ENCODE measurements at regions of chr3 and their contacts with region 1.

Region 1: GRCh38 chr3:179872842-179873241 is 163.9 kb downstream of the PEX5L start:
- DNase-seq: no peak
- H3K4me3 ChIP-seq: no peak overlapping the region
- H3K27ac ChIP-seq: no peak overlapping the region
- H3K4me1 ChIP-seq: peaks cover 0 to 3% (median 0%) of the 10 kb centered on the region in 4 experiments; a peak in 2 of 7 replicates
- H3K27me3 ChIP-seq: no peaks in the 10 kb centered on the region
- CTCF ChIP-seq: peak; percentile 31 to 56 (median 49)
- EP300 ChIP-seq: no peak
- POLR2A ChIP-seq: no peak
- RAD21 ChIP-seq: peak; percentile 51 to 57

Region 2: GRCh38 chr3:179887295-179887943 is 14.6 kb after region 1 on chr3:
- CTCF ChIA-PET with region 1: interaction called, 25 read pairs
- POLR2A ChIA-PET with region 1: no interaction called
- DNase-seq: no peak
- H3K4me3 ChIP-seq: no peak overlapping the region; a peak in 1 of 8 replicates
- H3K27ac ChIP-seq: no peak overlapping the region
- H3K4me1 ChIP-seq: peaks cover 0 to 16% (median 12%) of the 10 kb centered on the region in 4 experiments; a peak in 3 of 7 replicates
- H3K27me3 ChIP-seq: no peaks in the 10 kb centered on the region
- CTCF ChIP-seq: no peak
- EP300 ChIP-seq: no peak
- POLR2A ChIP-seq: no peak
- RAD21 ChIP-seq: no peak

Region 3: DNA sequence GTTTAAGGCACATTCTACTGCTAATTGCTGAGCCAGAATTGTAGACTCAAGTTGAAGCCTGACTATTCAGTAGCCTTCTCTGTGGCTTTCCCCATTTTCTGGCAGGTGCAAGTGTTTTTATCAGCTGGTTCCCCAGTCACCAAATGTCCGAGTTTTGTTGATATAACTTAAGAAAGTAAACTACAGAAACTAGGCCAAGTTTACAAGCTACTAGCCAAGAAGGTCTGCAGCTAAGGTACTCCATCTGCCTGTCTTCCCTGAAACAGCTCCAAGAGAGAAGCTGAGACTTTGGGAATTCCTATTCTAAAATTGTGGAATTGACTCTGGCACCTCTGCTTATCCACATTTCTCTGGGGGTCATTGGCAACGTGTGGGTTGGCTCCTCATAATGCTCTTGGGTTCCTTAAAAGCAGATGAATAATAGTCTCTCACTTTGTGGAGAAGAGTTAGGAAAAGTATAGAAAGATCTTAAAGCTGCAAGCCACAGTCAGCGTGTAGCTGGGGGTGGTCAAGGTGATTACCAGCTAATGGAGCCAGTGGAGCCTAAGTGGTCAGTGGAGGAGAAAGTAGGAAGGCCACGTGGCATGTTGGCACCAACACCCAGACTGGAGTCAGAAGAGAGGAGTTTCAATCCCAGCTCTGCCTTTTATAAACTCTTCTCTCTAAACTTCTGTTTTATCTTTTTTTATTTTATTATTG is 35.1 kb after region 1 on chr3:
- CTCF ChIA-PET with region 1: no interaction called
- POLR2A ChIA-PET with region 1: no interaction called
- DNase-seq: no peak
- H3K4me3 ChIP-seq: no peak overlapping the region
- H3K27ac ChIP-seq: no peak overlapping the region
- H3K4me1 ChIP-seq: no peaks in the 10 kb centered on the region
- H3K27me3 ChIP-seq: no peaks in the 10 kb centered on the region
- CTCF ChIP-seq: no peak
- EP300 ChIP-seq: no peak
- POLR2A ChIP-seq: no peak
- RAD21 ChIP-seq: no peak

Region 4: GRCh38 chr3:180004542-180004941 is 131.7 kb after region 1 on chr3:
- CTCF ChIA-PET with region 1: no interaction called
- POLR2A ChIA-PET with region 1: no interaction called
- DNase-seq: no peak
- H3K4me3 ChIP-seq: no peak overlapping the region
- H3K27ac ChIP-seq: no peak overlapping the region
- H3K4me1 ChIP-seq: no peaks in the 10 kb centered on the region
- H3K27me3 ChIP-seq: peaks cover 0 to 1% (median 0%) of the 10 kb centered on the region in 4 experiments; a peak in 1 of 7 replicates
- CTCF ChIP-seq: no peak
- EP300 ChIP-seq: no peak
- POLR2A ChIP-seq: no peak
- RAD21 ChIP-seq: no peak

Measured in H1 (cell line).